Left ventricle myocardium inferior (tissue), 1 donor: ENCODE measurements at regions of chr5 and their contacts with region 1.

Region 1: GRCh38 chr5:119943148-119943547 is 313.8 kb downstream of the FAM170A start:
- DNase-seq: no peak
- H3K4me3 ChIP-seq: no peak overlapping the region
- H3K27ac ChIP-seq: no peak overlapping the region
- H3K4me1 ChIP-seq: no peaks in the 10 kb centered on the region
- H3K27me3 ChIP-seq: no peaks in the 10 kb centered on the region
- CTCF ChIP-seq: peak; percentile 51

Region 2: GRCh38 chr5:120457839-120458507 is 514.8 kb after region 1 on chr5:
- intact Hi-C with region 1: loop called (anchors 5 kb)
- DNase-seq: peak; percentile 84
- H3K4me3 ChIP-seq: peak overlapping the region; percentile 55
- H3K27ac ChIP-seq: peak overlapping the region; percentile 11
- H3K4me1 ChIP-seq: peaks cover 18% of the 10 kb centered on the region
- H3K27me3 ChIP-seq: no peaks in the 10 kb centered on the region
- CTCF ChIP-seq: peak; percentile 87

Region 3: DNA sequence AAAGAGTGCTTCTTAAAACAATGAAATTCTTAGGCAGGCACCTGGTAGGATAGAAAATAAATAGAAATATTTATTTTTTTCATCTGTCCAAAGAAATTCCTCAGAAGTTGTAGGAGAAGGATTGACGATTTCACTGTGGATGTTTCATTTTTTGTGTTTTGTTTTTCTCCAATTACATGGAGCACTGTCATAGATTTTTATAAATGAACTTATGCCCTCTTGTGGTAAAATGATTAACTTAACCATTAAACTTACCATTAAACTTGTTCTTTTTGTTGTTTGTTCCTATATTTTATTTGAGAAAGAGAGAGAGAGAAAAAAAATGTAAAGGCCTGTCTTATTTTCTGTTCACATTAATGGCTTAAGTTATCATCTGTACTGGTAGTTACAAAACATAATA is 860.1 kb after region 1 on chr5:
- intact Hi-C with region 1: loop called (anchors 5 kb)
- DNase-seq: no peak
- H3K4me3 ChIP-seq: no peak overlapping the region
- H3K27ac ChIP-seq: no peak overlapping the region
- H3K4me1 ChIP-seq: no peaks in the 10 kb centered on the region
- H3K27me3 ChIP-seq: no peaks in the 10 kb centered on the region
- CTCF ChIP-seq: peak; percentile 42